SK-N-SH (cell line): ENCODE measurements at regions of chr9 and their contacts with region 1.

Region 1: DNA sequence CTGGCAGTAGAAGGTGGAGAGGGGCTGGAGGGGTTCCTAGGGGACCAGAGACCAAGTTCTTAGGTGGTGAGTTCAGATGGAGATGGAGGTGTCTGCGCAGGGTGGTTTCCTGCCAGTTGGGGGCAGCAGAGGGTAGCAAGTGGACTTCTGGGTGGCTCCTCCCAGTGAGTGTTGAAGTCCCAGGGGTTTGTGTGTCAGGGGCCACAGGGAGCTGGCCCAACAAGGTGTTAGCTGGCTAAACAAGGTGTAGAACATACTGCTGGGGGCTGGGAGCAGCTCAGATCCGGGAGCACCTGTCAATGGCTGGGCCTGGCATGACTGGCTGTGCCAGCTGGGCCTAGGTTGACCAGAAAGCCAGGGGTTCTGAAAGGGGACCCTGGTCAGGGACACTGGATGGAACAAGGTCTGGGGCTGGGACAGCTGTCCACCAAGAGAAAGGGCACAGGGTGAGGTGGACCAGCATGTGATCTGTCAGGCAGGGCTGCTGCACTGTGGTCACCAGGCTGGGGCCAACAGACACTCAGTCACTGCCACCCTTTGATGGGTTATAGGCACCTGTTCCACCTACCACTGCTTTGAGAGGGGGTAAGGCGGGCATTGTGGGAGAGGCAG is 35.6 kb downstream of the DAB2IP start:
- DNase-seq: peak; percentile 85
- H3K4me3 ChIP-seq: no peak overlapping the region; a peak in 1 of 4 replicates
- H3K27ac ChIP-seq: no peak overlapping the region
- H3K4me1 ChIP-seq: peaks cover 0 to 4% of the 10 kb centered on the region in 2 experiments; a peak in 1 of 4 replicates
- H3K27me3 ChIP-seq: no peaks in the 10 kb centered on the region
- CTCF ChIP-seq: peak; percentile 93
- EP300 ChIP-seq: no peak
- RAD21 ChIP-seq: peak; percentile 89

Region 2: DNA sequence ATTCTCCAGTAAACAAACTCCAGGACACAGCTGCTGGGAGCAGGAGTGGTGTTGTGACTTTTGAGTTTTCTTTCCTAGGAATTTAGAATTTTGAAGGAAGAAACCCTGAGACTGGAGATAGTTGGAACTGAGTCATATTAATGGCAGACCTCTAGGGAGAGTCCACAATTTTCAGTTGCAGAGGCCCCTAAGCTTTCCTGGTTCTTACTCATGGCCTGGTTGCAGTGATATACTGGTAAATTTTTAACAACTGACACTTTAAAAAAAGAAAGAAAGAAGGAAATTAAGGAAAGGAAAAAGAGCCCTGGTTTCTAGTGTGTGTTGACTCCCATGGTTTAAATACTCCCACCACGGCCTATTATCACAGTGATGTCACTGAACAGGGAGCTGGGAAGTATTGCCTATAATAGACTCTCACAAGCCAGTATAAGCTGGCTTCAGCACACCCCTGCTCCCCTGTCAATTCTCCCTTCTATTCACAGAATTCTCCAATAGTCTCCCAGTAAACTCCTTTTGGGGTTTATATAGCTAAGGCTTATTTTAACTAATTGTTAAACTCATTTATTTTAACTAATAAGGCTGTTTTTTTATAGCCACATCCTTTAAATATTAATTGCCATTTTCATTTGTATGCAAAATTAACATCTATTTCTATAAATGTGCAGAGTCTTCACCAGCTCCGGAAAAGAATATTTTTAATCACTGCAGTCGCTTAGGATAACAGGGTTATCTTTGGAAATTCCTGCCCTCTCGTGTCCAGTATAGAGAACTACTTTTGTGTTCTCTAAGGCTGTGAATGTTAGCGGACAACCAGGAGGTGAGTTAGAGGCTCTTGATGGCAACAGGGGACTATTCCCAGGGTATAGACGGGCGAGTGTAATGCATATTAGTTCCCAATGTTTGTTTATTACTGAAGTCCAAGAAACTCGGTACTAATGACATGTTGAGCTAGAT is 247.0 kb before region 1 on chr9:
- CTCF ChIA-PET with region 1: no interaction called
- POLR2A ChIA-PET with region 1: no interaction called
- DNase-seq: peak; percentile 33
- H3K4me3 ChIP-seq: no peak overlapping the region; a peak in 1 of 4 replicates
- H3K27ac ChIP-seq: no peak overlapping the region
- H3K4me1 ChIP-seq: no peaks in the 10 kb centered on the region
- H3K27me3 ChIP-seq: peaks cover 17% of the 10 kb centered on the region; the same call in 1 of the 2 replicates
- CTCF ChIP-seq: peak; percentile 53
- EP300 ChIP-seq: no peak
- RAD21 ChIP-seq: peak; percentile 45

Region 3: GRCh38 chr9:121538246-121538645 is 148.8 kb before region 1 on chr9:
- CTCF ChIA-PET with region 1: no interaction called
- POLR2A ChIA-PET with region 1: no interaction called
- DNase-seq: peak; percentile 56
- H3K4me3 ChIP-seq: no peak overlapping the region
- H3K27ac ChIP-seq: no peak overlapping the region
- H3K4me1 ChIP-seq: no peaks in the 10 kb centered on the region; a peak in 1 of 4 replicates
- H3K27me3 ChIP-seq: no peaks in the 10 kb centered on the region
- CTCF ChIP-seq: peak; percentile 29
- EP300 ChIP-seq: no peak
- RAD21 ChIP-seq: peak; percentile 75

Region 4: DNA sequence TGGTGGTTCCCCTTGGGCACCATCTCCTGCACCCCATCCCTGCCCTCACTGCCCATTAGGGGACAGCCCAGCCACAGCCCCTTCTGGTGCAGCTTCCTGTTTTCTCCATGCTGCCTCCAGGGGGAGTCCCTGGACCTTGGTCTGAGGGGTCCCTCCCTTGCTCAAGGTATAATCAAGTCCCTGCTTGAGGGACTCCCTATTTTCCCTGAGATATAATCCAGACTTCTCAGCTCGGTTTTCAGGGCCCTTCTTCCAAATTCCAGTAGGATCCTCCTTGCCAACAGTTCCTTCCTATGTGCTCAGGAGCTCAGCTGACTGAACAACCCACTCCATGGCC is 66.0 kb before region 1 on chr9:
- CTCF ChIA-PET with region 1: interaction called, 10 read pairs
- POLR2A ChIA-PET with region 1: no interaction called
- DNase-seq: peak; percentile 79
- H3K4me3 ChIP-seq: no peak overlapping the region; a peak in 1 of 4 replicates
- H3K27ac ChIP-seq: no peak overlapping the region
- H3K4me1 ChIP-seq: peaks cover 0 to 20% of the 10 kb centered on the region in 2 experiments; a peak in 1 of 4 replicates
- H3K27me3 ChIP-seq: no peaks in the 10 kb centered on the region
- CTCF ChIP-seq: peak; percentile 64
- EP300 ChIP-seq: no peak
- RAD21 ChIP-seq: peak; percentile 69

Region 5: DNA sequence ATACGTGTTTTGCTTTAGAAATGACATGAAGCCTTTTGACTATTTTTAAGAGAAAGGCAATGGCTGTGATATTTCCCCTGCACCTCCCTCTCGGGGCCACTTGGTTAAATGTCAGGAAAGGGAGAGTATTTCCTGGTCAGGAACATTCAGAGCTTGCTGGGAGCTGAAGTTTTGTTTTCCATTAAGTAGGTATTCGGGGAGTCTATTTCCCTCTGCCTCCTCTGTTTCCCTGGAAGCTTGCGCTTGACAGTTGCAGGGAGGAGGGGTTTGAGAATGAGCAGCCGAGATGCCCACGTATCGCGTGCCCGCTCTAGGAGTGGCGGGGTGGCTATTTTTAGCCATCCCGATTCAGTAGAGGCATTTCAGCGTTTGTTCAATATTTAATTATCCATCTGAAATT is 28.9 kb before region 1 on chr9:
- CTCF ChIA-PET with region 1: interaction called, 10 read pairs
- POLR2A ChIA-PET with region 1: no interaction called
- DNase-seq: no peak
- H3K4me3 ChIP-seq: no peak overlapping the region
- H3K27ac ChIP-seq: no peak overlapping the region
- H3K4me1 ChIP-seq: peaks cover 4 to 28% of the 10 kb centered on the region in 2 experiments; a peak in 1 of 4 replicates
- H3K27me3 ChIP-seq: no peaks in the 10 kb centered on the region
- CTCF ChIP-seq: no peak
- EP300 ChIP-seq: no peak
- RAD21 ChIP-seq: no peak

Region 6: DNA sequence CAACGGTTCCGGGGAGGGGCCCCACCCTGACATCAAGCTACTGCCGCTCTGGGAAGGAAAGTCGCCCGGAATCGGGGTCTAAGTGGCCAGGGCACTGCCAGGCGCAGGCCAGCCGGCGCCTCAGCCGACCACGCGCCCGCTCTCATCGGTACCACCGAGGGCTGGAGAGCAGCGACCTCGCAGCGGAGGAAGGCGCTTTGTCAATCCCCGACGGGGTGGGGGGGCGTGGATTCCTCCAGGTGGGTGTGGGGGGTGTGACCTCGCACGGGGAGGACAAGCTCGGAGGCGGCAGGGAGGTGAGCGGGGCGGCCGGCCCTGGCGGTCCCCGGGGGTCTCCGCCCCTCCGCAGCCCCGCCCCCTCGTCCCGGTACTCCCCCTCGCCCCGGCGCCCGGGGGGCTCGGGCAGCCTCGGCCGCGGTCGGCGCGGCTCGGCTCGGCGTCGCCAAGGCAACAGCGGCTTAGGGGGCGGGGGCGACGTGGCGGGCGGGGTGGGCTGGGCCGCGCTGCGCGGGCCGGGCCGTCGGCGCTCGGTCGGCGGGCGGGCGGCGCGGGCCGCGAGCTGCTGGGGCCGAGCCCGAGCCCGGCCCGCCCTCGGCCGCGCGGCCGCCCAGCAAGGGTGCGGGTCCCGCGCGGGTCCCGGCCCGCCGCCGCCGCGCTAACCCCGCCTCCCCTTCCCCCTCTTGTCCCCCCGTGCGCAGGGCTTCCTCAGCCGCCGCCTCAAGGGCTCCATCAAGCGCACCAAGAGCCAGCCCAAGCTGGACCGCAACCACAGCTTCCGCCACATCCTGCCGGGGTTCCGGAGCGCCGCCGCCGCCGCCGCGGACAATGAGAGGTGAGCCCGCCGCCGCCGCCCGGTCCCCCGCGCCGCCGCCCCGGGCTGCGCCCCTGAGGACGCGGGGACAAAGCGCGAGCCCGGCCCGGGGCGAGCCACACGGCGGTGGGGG is 11.9 kb after region 1 on chr9:
- CTCF ChIA-PET with region 1: interaction called, 75 read pairs
- POLR2A ChIA-PET with region 1: interaction called, 4 read pairs
- DNase-seq: peak; percentile 96
- H3K4me3 ChIP-seq: peak overlapping the region; percentile 75 to 76
- H3K27ac ChIP-seq: peak overlapping the region; percentile 33 to 87; a peak in 3 of 4 replicates
- H3K4me1 ChIP-seq: peaks cover 0 to 51% of the 10 kb centered on the region in 2 experiments; a peak in 1 of 4 replicates
- H3K27me3 ChIP-seq: no peaks in the 10 kb centered on the region
- CTCF ChIP-seq: no peak
- EP300 ChIP-seq: no peak
- RAD21 ChIP-seq: no peak

Region 7: DNA sequence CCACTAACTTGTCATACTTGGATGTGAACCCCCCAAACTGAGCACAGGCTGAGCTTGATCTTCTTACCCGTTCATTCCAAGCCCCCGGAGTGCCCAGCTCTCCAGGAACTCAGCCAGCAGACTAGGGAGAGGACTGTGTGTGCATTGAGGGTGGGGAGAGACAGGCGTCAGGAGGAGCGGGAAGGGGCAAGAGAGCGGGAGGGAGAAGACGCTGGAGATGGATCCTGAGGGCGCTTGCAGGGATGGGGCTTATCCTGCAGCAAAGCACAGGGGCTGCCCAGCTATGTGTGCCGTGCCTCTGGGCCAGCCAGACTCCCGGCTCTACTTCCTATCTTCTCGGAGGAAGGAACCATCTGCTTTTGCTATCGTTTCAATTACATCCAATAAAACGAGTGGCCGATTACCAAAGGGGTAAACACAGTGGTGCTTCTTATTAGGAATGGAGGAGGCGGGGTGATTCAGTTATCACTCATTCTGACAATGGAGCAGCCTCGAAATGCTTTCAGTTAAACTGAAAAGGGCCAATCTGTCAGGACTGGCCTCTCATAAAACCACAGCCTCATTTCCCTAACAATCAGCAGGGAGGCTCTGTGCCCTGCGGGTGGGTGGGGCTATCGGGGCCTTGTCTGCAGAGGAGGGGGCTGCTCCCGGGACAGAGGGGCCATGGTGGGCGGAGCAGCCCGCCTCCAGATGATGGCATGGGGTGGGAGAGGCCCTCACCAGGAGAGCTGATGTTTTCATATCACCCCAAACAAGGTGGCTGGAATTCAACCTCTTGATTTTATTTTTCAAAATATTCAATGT is 132.6 kb after region 1 on chr9:
- CTCF ChIA-PET with region 1: no interaction called
- POLR2A ChIA-PET with region 1: no interaction called
- DNase-seq: peak; percentile 89
- H3K4me3 ChIP-seq: no peak overlapping the region; a peak in 1 of 4 replicates
- H3K27ac ChIP-seq: no peak overlapping the region
- H3K4me1 ChIP-seq: peaks cover 0 to 22% of the 10 kb centered on the region in 2 experiments; a peak in 2 of 4 replicates
- H3K27me3 ChIP-seq: no peaks in the 10 kb centered on the region
- CTCF ChIP-seq: no peak
- EP300 ChIP-seq: peak in 1 of 2 experiments; percentile 19; a peak in 1 of 4 replicates
- RAD21 ChIP-seq: no peak

Region 8: DNA sequence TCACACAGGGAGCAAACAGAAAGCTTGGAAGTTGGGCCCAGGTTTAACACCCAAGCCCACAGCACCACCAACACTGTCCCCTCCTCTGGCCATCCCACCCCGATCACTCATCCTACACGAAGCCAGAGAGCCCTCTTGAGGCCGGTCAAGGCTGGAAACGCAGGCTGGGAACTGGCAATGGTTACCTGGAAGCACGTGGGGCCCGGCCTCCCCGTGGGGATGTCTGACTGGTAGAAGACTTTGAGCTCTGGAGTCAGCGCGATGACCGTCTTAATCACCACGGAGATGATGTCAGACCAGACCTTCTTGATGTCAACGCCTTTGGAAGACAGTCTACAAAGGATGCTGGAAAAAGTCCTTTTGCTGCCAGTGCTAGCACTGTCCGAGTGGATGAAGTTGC is 302.0 kb after region 1 on chr9:
- CTCF ChIA-PET with region 1: interaction called, 14 read pairs
- POLR2A ChIA-PET with region 1: no interaction called
- DNase-seq: no peak
- H3K4me3 ChIP-seq: no peak overlapping the region
- H3K27ac ChIP-seq: no peak overlapping the region
- H3K4me1 ChIP-seq: peaks cover 8 to 10% of the 10 kb centered on the region in 2 experiments; a peak in 3 of 4 replicates
- H3K27me3 ChIP-seq: no peaks in the 10 kb centered on the region
- CTCF ChIP-seq: peak; percentile 44
- EP300 ChIP-seq: no peak
- RAD21 ChIP-seq: peak; percentile 55